H1 (cell line): ENCODE measurements at regions of chr12 and their contacts with region 1.

Region 1: GRCh38 chr12:3150931-3151835 is 74.0 kb downstream of the TSPAN9 start:
- DNase-seq: no peak
- H3K4me3 ChIP-seq: no peak overlapping the region
- H3K27ac ChIP-seq: no peak overlapping the region
- H3K4me1 ChIP-seq: peaks cover 8 to 31% (median 27%) of the 10 kb centered on the region in 4 experiments
- H3K27me3 ChIP-seq: no peaks in the 10 kb centered on the region; a peak in 1 of 7 replicates
- CTCF ChIP-seq: no peak
- EP300 ChIP-seq: no peak
- POLR2A ChIP-seq: no peak
- RAD21 ChIP-seq: no peak; a peak in 1 of 4 replicates

Region 2: GRCh38 chr12:3168223-3169221 is 17.3 kb after region 1 on chr12:
- CTCF ChIA-PET with region 1: interaction called, 95 read pairs
- POLR2A ChIA-PET with region 1: interaction called, 3 read pairs
- DNase-seq: peak in 1 of 2 experiments; percentile 33
- H3K4me3 ChIP-seq: no peak overlapping the region
- H3K27ac ChIP-seq: no peak overlapping the region
- H3K4me1 ChIP-seq: peaks cover 8 to 23% (median 19%) of the 10 kb centered on the region in 4 experiments
- H3K27me3 ChIP-seq: no peaks in the 10 kb centered on the region
- CTCF ChIP-seq: no peak
- EP300 ChIP-seq: no peak
- POLR2A ChIP-seq: no peak
- RAD21 ChIP-seq: no peak